Left colon (tissue), 2 donors: ENCODE measurements at regions of chr20 and their contacts with region 1.

Region 1: DNA sequence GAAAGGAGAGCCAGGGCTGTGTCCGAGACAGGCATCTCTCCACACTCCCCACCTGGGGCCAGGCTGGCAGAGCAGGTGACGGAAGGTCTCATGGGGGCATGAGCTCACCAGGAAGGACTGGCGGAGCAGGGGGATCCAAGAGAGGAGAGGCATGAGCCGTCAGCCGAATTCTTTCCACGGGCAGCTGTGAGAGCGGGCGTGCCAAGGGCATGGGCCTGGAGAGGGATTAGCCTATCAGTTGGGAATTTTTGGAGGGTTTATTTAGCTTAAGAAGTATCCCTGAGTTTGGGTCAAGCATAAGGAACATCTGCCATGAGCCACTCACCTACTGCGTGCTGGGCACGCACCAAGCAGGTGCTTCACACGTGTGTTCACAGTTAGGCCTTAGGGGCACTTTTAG is 60.2 kb upstream of the ZNFX1 start:
- DNase-seq: no peak
- ATAC-seq: no peak

Region 2: DNA sequence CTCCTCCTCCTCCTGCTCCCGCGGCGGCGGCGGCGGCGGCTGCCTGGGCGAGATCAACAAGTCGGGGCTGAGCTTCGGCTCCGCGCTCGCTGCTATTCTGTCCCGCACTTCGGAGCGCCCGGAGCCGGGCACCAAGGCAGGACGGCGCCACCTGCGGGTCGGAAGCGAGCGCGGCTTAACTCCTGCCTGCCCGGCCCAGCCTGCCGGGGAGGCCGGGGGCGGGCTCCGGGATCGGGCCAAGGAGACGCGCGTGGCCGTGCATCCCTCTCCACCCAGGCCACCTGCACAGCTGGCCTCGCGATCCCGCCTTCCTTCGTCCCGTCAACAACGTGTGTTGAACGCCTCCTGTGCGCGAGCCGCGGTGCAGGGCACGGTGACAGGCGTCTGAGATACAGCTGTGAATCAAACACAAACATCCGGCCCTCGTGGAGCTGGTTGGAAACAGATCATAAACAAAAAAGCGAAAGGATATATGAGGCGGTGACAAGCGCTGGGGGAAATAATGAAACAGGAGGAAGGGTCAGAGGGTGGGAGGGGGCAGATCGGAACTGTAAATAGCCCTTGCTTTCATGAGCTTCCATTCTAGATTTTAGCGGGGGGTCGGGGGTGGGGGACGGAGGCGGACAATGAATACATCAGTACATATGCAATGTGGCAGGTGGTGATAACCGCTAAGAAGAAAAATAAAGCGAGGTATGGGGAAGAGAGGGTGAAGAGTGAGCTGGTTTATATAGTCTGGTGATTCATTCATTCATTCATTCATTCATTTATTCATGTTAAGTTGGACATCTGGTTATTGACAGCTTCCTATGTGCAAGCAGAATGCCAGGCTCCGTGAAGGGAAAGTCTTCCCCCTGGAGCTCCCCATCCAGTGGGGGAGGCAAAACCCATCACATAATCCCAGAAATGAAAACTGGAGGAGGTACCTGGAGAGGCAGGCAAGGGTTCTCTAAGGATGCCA is 146.4 kb after region 1 on chr20:
- intact Hi-C with region 1: loop called (anchors 10 kb)
- DNase-seq: peak; percentile 69 to 82
- ATAC-seq: peak; percentile 96

Region 3: GRCh38 chr20:49534255-49534712 is 196.2 kb after region 1 on chr20:
- intact Hi-C with region 1: loop called in 1 of 2 experiments (anchors 2 kb)
- DNase-seq: peak in 1 of 2 donors; percentile 58
- ATAC-seq: peak; percentile 64